Activated T-helper 1 cell treated with anti-CD3 and anti-CD28 coated beads, Interleukin-12 subunit alpha, Interleukin-12 subunit beta, Interleukin-2, Interleukin-4 antibody, amounts not matched to agents 30 ng/mL and 10 ng/mL and 1 ng/mL, durations not matched to agents 14 hours and 24 hours and 36 hours (primary cell): ENCODE measurements at regions of chr6 and their contacts with region 1.

Region 1: DNA sequence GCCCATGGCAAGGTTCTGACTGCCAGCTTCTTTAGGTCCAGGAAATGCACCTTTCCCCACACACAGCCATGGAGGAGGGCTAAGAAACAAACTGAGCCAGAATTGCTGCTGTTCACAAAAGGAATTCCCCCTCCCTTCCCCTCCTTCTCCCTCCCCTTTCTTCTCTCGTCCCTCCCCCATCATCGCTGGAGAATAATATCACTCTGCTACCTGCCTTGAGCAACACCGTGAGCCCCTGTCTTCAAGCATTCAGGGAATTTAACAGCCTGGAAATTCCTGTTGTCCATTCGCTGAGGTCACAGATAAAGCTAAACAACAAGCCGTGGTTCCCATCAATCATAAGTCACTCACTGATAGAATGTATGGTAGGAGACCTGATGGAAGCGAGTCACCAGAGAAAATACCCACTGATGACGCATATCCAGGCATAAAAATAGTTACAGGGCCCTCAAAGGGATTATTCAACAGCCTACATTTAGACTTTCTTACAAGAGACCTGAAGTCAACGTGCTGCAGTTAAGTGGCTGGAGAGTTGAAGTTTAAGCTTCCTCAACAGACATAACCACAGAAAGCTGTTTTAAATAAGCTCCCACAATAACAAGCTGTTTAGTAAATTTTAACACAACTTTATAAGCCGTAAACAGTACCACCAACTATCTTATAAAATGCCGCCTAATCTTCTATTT is 59.7 kb downstream of the HIVEP2 start:
- DNase-seq: peak; percentile 45
- H3K4me3 Mint-ChIP-seq: peak overlapping the region; percentile 96
- H3K27ac Mint-ChIP-seq: peak overlapping the region; percentile 99
- H3K4me1 Mint-ChIP-seq: peaks cover 92% of the 10 kb centered on the region
- H3K27me3 Mint-ChIP-seq: no peaks in the 10 kb centered on the region

Region 2: GRCh38 chr6:142819603-142820337 is 65.6 kb before region 1 on chr6:
- intact Hi-C with region 1: loop called (anchors 1 kb)
- DNase-seq: peak; percentile 50
- H3K4me3 Mint-ChIP-seq: peak overlapping the region; percentile 85
- H3K27ac Mint-ChIP-seq: peak overlapping the region; percentile 98
- H3K4me1 Mint-ChIP-seq: peaks cover 75% of the 10 kb centered on the region
- H3K27me3 Mint-ChIP-seq: peaks cover 3% of the 10 kb centered on the region

Region 3: GRCh38 chr6:142857233-142857761 is 28.0 kb before region 1 on chr6:
- intact Hi-C with region 1: loop called (anchors 1 kb)
- DNase-seq: no peak
- H3K4me3 Mint-ChIP-seq: peak overlapping the region; percentile 80
- H3K27ac Mint-ChIP-seq: peak overlapping the region; percentile 95
- H3K4me1 Mint-ChIP-seq: peaks cover 81% of the 10 kb centered on the region
- H3K27me3 Mint-ChIP-seq: no peaks in the 10 kb centered on the region

Region 4: DNA sequence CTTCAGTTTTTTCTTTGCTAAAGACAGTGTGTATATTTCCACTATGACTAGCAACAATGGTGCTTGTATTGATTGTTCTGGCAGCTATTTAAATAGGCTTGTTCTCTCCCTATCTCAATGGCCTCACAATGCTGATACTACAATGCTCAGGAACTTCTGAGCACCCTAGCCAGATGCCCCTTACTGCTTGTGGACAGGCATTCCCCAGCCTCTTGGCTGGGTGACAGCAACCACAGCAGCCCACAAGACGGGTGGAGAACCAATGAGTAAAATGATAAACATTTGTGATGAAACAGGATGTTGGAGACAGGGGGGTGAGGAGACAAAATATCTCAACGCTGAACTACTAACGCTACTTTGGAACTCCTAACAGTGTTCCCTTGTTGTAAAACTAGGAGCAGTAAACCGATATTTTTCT is 17.3 kb after region 1 on chr6:
- intact Hi-C with region 1: loop called (anchors 1 kb)
- DNase-seq: peak; percentile 76
- H3K4me3 Mint-ChIP-seq: peak overlapping the region; percentile 49
- H3K27ac Mint-ChIP-seq: peak overlapping the region; percentile 91
- H3K4me1 Mint-ChIP-seq: peaks cover 63% of the 10 kb centered on the region
- H3K27me3 Mint-ChIP-seq: no peaks in the 10 kb centered on the region

Region 5: GRCh38 chr6:143049611-143050010 is 164.3 kb after region 1 on chr6:
- intact Hi-C with region 1: no loop called
- DNase-seq: no peak
- H3K4me3 Mint-ChIP-seq: no peak overlapping the region
- H3K27ac Mint-ChIP-seq: no peak overlapping the region
- H3K4me1 Mint-ChIP-seq: peaks cover 6% of the 10 kb centered on the region
- H3K27me3 Mint-ChIP-seq: peaks cover 8% of the 10 kb centered on the region

Region 6: DNA sequence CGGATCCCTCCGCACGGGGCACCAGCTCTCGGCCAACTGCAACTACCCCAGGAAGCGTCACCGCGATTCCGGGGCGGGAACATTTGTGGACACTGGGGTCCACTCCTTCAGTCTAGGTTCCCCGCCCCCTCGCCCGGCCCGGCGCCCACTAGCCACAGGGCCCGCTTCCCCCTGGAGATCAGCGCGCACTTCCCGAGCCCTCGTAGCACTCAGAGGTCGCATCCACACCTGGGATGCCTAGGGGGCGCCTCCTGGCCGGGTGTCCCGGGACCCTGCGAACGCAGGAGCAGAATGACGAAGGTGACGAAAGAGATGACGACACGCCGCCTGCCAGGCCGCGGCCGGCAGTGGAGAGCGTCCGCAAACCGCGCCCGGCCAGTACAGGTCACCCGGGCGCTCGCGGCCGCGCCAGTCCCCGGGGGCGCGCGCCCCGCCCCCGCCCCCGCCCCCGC is 175.1 kb after region 1 on chr6:
- intact Hi-C with region 1: loop called (anchors 1 kb)
- DNase-seq: peak; percentile 72
- H3K4me3 Mint-ChIP-seq: peak overlapping the region; percentile 90
- H3K27ac Mint-ChIP-seq: peak overlapping the region; percentile 94
- H3K4me1 Mint-ChIP-seq: peaks cover 28% of the 10 kb centered on the region
- H3K27me3 Mint-ChIP-seq: no peaks in the 10 kb centered on the region